B cell (primary cell): ENCODE measurements at regions of chr1 and their contacts with region 1.

Region 1: GRCh38 chr1:206734499-206735142 is 36.0 kb upstream of the IL19 start:
- DNase-seq: peak; percentile 80
- ATAC-seq: peak; percentile 80
- H3K4me3 ChIP-seq: no peak overlapping the region
- H3K4me3 Mint-ChIP-seq: no peak overlapping the region
- H3K27ac ChIP-seq: no peak overlapping the region
- H3K27ac Mint-ChIP-seq: peak overlapping the region; percentile 69
- H3K4me1 ChIP-seq: peaks cover 20 to 37% of the 10 kb centered on the region in 2 donors
- H3K4me1 Mint-ChIP-seq: peaks cover 45% of the 10 kb centered on the region
- H3K27me3 ChIP-seq: no peaks in the 10 kb centered on the region
- H3K27me3 Mint-ChIP-seq: no peaks in the 10 kb centered on the region
- CTCF ChIP-seq: peak; percentile 86

Region 2: GRCh38 chr1:206766251-206766856 is 31.7 kb after region 1 on chr1:
- CTCF ChIA-PET with region 1: interaction called, 81 read pairs
- POLR2A ChIA-PET with region 1: no interaction called
- intact Hi-C with region 1: loop called (anchors 2 kb)
- DNase-seq: peak; percentile 74
- ATAC-seq: peak; percentile 75
- H3K4me3 ChIP-seq: no peak overlapping the region
- H3K4me3 Mint-ChIP-seq: peak overlapping the region; percentile 69
- H3K27ac ChIP-seq: no peak overlapping the region
- H3K27ac Mint-ChIP-seq: peak overlapping the region; percentile 51
- H3K4me1 ChIP-seq: peaks cover 36 to 41% of the 10 kb centered on the region in 2 donors
- H3K4me1 Mint-ChIP-seq: peaks cover 51% of the 10 kb centered on the region
- H3K27me3 ChIP-seq: no peaks in the 10 kb centered on the region
- H3K27me3 Mint-ChIP-seq: no peaks in the 10 kb centered on the region
- CTCF ChIP-seq: no peak

Region 3: DNA sequence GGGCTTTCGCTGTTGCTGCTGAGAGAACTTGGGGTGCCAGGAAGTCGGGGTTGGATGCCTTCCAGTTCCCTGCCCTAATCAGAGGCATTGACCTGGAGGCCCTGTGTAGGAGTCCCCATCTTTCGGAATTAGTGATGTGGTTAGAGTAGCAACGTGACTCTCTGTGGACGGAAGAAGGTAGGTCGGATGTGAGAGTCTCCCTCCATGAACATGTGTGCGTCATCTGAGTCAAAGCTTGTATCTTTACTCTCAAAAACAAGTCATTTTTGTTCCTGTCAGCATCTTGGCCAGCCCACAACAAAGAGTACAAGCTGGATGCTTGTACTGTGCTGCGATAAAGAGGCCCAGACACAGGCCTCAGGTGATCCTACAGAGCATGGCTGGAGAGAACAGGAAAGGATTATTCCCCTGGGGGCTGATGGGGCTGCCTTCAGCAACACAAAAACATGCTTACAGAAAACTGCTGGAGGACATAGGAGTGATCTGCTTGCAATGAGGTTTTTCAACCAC is 68.7 kb after region 1 on chr1:
- CTCF ChIA-PET with region 1: interaction called, 278 read pairs
- POLR2A ChIA-PET with region 1: interaction called, 9 read pairs
- intact Hi-C with region 1: loop called (anchors 1 kb)
- DNase-seq: peak; percentile 70
- ATAC-seq: peak; percentile 90
- H3K4me3 ChIP-seq: no peak overlapping the region
- H3K4me3 Mint-ChIP-seq: peak overlapping the region; percentile 13
- H3K27ac ChIP-seq: no peak overlapping the region
- H3K27ac Mint-ChIP-seq: peak overlapping the region; percentile 87
- H3K4me1 ChIP-seq: peaks cover 4 to 19% of the 10 kb centered on the region in 2 donors
- H3K4me1 Mint-ChIP-seq: peaks cover 35% of the 10 kb centered on the region
- H3K27me3 ChIP-seq: no peaks in the 10 kb centered on the region
- H3K27me3 Mint-ChIP-seq: no peaks in the 10 kb centered on the region
- CTCF ChIP-seq: no peak

Region 4: DNA sequence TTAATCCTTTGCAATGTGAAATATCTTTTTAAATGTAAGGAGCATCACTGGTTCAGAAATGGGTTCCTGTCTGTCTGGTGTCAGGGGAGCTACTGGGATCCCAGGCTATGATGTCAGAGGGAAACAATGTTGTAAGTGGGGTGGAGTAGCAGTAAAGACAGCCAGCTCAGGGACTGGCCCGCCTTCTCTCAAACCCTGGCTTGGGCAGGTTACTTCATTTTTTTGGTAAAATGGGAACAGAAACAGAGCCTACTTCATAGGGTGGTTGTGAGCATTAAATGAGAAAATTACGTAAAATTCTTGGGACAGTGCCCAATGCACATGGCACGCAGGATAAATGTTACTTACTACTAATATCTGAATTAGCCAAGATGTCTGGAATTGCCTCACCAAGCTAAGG is 100.1 kb after region 1 on chr1:
- CTCF ChIA-PET with region 1: interaction called, 10 read pairs
- POLR2A ChIA-PET with region 1: no interaction called
- intact Hi-C with region 1: no loop called
- DNase-seq: no peak
- ATAC-seq: no peak
- H3K4me3 ChIP-seq: no peak overlapping the region
- H3K4me3 Mint-ChIP-seq: no peak overlapping the region
- H3K27ac ChIP-seq: no peak overlapping the region
- H3K27ac Mint-ChIP-seq: no peak overlapping the region
- H3K4me1 ChIP-seq: peaks cover 49 to 51% of the 10 kb centered on the region in 2 donors
- H3K4me1 Mint-ChIP-seq: peaks cover 49% of the 10 kb centered on the region
- H3K27me3 ChIP-seq: no peaks in the 10 kb centered on the region
- H3K27me3 Mint-ChIP-seq: peaks cover 12% of the 10 kb centered on the region
- CTCF ChIP-seq: no peak

Region 5: GRCh38 chr1:206912445-206913095 is 177.9 kb after region 1 on chr1:
- CTCF ChIA-PET with region 1: interaction called, 97 read pairs
- POLR2A ChIA-PET with region 1: interaction called, 4 read pairs
- intact Hi-C with region 1: loop called (anchors 1 kb)
- DNase-seq: peak; percentile 84
- ATAC-seq: peak; percentile 62
- H3K4me3 ChIP-seq: peak overlapping the region in 4 of 5 experiments; percentile 8 to 32 (median 18)
- H3K4me3 Mint-ChIP-seq: no peak overlapping the region
- H3K27ac ChIP-seq: peak overlapping the region; percentile 30 to 88
- H3K27ac Mint-ChIP-seq: peak overlapping the region; percentile 87
- H3K4me1 ChIP-seq: peaks cover 97 to 99% of the 10 kb centered on the region in 2 donors
- H3K4me1 Mint-ChIP-seq: peaks cover 94% of the 10 kb centered on the region
- H3K27me3 ChIP-seq: no peaks in the 10 kb centered on the region
- H3K27me3 Mint-ChIP-seq: no peaks in the 10 kb centered on the region
- CTCF ChIP-seq: peak; percentile 86

Region 6: GRCh38 chr1:207103892-207104373 is 369.3 kb after region 1 on chr1 and contains the start of gene C4BPA:
- CTCF ChIA-PET with region 1: no interaction called
- POLR2A ChIA-PET with region 1: no interaction called
- intact Hi-C with region 1: no loop called
- DNase-seq: no peak
- ATAC-seq: no peak
- H3K4me3 ChIP-seq: no peak within 1 kb of the TSS
- H3K4me3 Mint-ChIP-seq: no peak within 1 kb of the TSS
- H3K27ac ChIP-seq: no peak within 1 kb of the TSS
- H3K27ac Mint-ChIP-seq: no peak within 1 kb of the TSS
- H3K4me1 ChIP-seq: no peaks in the 10 kb centered on the region
- H3K4me1 Mint-ChIP-seq: no peaks in the 10 kb centered on the region
- H3K27me3 ChIP-seq: peaks cover 0 to 7% (median 1%) of the 10 kb centered on the region in 4 experiments
- H3K27me3 Mint-ChIP-seq: peaks cover 47% of the 10 kb centered on the region
- CTCF ChIP-seq: no peak
- total RNA-seq, gene C4BPA: not detected in 2 replicates

Region 7: DNA sequence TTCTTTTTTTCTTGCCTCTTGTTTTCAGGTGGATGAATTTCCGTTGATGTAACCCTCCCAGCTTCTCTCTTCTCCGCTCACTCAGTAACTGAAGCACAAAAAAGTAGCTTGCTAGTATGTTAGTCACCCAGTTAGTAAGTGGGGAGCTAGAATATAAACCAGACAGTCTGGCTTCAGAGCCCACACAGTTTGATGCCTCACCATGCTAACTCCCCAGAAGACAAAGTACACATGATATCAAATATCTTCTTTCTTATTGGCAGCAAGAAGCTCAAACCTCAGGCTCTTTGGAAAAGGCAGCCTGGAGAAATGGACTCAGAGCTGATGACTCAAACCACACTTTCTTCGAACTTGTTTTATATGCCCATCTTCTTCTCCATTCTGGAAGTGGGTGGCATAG is 1697.1 kb after region 1 on chr1:
- CTCF ChIA-PET with region 1: no interaction called
- POLR2A ChIA-PET with region 1: no interaction called
- intact Hi-C with region 1: no loop called
- DNase-seq: no peak
- ATAC-seq: no peak
- H3K4me3 ChIP-seq: no peak overlapping the region
- H3K4me3 Mint-ChIP-seq: no peak overlapping the region
- H3K27ac ChIP-seq: no peak overlapping the region
- H3K27ac Mint-ChIP-seq: no peak overlapping the region
- H3K4me1 ChIP-seq: no peaks in the 10 kb centered on the region
- H3K4me1 Mint-ChIP-seq: no peaks in the 10 kb centered on the region
- H3K27me3 ChIP-seq: peaks cover 0 to 2% (median 0%) of the 10 kb centered on the region in 4 experiments
- H3K27me3 Mint-ChIP-seq: no peaks in the 10 kb centered on the region
- CTCF ChIP-seq: no peak